CD4-positive, alpha-beta T cell (primary cell): ENCODE measurements at regions of chr1 and their contacts with region 1.

Region 1: GRCh38 chr1:198771563-198772153 is 132.8 kb downstream of the PTPRC start:
- DNase-seq: peak in 3 of 14 experiments; percentile 26 to 51 (median 51)
- ATAC-seq: no peak
- H3K4me3 ChIP-seq: no peak overlapping the region
- H3K4me3 Mint-ChIP-seq: no peak overlapping the region
- H3K27ac ChIP-seq: no peak overlapping the region
- H3K27ac Mint-ChIP-seq: no peak overlapping the region
- H3K4me1 ChIP-seq: peaks cover 3% of the 10 kb centered on the region
- H3K4me1 Mint-ChIP-seq: peaks cover 5% of the 10 kb centered on the region
- H3K27me3 ChIP-seq: no peaks in the 10 kb centered on the region
- H3K27me3 Mint-ChIP-seq: no peaks in the 10 kb centered on the region
- CTCF ChIP-seq: peak; percentile 52

Region 2: GRCh38 chr1:199243423-199244061 is 471.9 kb after region 1 on chr1:
- CTCF ChIA-PET with region 1: no interaction called
- POLR2A ChIA-PET with region 1: no interaction called
- intact Hi-C with region 1: loop called (anchors 2 kb)
- DNase-seq: peak; percentile 37 to 79 (median 53)
- ATAC-seq: peak; percentile 95
- H3K4me3 ChIP-seq: no peak overlapping the region
- H3K4me3 Mint-ChIP-seq: no peak overlapping the region
- H3K27ac ChIP-seq: no peak overlapping the region
- H3K27ac Mint-ChIP-seq: no peak overlapping the region
- H3K4me1 ChIP-seq: peaks cover 4% of the 10 kb centered on the region
- H3K4me1 Mint-ChIP-seq: no peaks in the 10 kb centered on the region
- H3K27me3 ChIP-seq: no peaks in the 10 kb centered on the region
- H3K27me3 Mint-ChIP-seq: no peaks in the 10 kb centered on the region
- CTCF ChIP-seq: peak; percentile 63

Region 3: DNA sequence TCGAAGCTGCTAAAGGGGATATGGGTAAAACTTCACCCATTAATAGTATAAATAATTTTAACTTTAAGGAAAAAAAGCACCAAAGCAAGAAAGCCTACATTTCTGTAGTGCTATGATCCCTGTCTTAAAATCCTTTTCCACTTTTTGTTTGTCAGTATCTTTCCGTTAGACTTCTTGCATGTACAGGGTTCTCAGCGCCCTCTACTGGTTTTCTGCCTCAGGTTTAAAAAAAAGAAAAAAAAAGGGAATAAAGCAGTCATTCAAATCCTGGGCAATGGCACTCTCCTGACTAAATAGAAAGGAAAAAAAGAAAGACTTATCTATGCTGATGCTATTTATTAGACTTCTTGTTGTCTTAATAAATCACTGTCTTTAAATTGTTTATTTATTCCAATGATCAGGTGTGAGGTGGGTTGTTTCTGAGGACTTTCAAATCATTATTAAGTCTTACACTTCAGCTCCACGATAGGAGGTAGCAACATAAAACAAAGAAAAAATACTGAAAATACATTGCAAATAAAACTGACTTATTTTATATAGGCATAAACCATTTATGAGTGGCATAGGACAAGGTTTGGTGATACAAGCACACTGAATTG is 780.4 kb after region 1 on chr1:
- CTCF ChIA-PET with region 1: no interaction called
- POLR2A ChIA-PET with region 1: no interaction called
- intact Hi-C with region 1: loop called (anchors 5 to 10 kb)
- DNase-seq: peak in 6 of 14 experiments; percentile 0 to 49 (median 27)
- ATAC-seq: no peak
- H3K4me3 ChIP-seq: no peak overlapping the region
- H3K4me3 Mint-ChIP-seq: no peak overlapping the region
- H3K27ac ChIP-seq: no peak overlapping the region
- H3K27ac Mint-ChIP-seq: no peak overlapping the region
- H3K4me1 ChIP-seq: no peaks in the 10 kb centered on the region
- H3K4me1 Mint-ChIP-seq: no peaks in the 10 kb centered on the region
- H3K27me3 ChIP-seq: peaks cover 0 to 6% of the 10 kb centered on the region in 2 experiments
- H3K27me3 Mint-ChIP-seq: peaks cover 9% of the 10 kb centered on the region
- CTCF ChIP-seq: peak; percentile 55